Aorta (tissue), 5 donors: ENCODE measurements at regions of chr4 and their contacts with region 1.

Region 1: DNA sequence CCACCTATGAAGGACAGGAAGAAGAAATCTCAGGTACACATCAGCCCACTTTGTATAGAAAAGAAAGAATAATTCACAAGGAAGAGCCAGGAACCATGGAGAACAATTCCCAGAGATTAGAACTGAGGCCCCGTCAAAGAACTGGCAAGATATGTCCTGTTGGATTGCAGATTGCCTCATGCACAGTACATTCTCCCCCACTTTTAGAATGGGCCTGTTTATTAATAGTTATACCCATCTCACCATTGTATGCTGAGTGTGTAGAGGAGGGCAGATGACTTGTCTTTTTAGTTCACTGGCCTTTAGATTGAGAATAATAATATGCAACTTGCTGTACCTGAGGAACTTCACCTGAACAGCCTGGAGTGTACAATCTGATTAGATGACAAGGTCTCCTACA is 315.6 kb upstream of the HAND2 start:
- DNase-seq: no peak
- ATAC-seq: no peak
- H3K4me3 ChIP-seq: no peak overlapping the region
- H3K27ac ChIP-seq: no peak overlapping the region
- H3K4me1 ChIP-seq: no peaks in the 10 kb centered on the region
- H3K27me3 ChIP-seq: no peaks in the 10 kb centered on the region

Region 2: DNA sequence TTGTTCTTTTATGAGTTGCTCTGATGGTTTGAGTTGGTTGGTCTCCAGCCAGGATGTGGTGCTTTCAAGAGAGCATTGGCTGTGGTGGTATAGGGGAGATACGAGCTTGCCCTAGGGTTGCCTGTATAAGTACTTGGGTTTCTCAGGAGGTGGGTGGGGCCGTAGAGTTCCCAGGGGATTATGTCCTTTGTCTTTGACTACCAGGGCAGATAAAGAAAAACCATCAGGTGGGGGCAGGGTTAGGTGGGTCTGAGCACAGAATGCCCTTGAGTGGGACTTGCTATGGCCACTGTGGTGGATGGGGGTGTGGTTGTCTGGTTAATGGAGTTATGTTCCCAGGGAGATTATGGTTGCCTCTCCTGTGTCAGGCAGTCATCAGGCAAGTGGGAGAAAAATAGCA is 67.7 kb before region 1 on chr4:
- intact Hi-C with region 1: loop called in 1 of 2 experiments (anchors 10 kb)
- DNase-seq: no peak
- ATAC-seq: no peak
- H3K4me3 ChIP-seq: no peak overlapping the region
- H3K27ac ChIP-seq: no peak overlapping the region
- H3K4me1 ChIP-seq: no peaks in the 10 kb centered on the region
- H3K27me3 ChIP-seq: no peaks in the 10 kb centered on the region